Naive thymus-derived CD4-positive, alpha-beta T cell (primary cell): ENCODE measurements at regions of chr6 and their contacts with region 1.

Region 1: DNA sequence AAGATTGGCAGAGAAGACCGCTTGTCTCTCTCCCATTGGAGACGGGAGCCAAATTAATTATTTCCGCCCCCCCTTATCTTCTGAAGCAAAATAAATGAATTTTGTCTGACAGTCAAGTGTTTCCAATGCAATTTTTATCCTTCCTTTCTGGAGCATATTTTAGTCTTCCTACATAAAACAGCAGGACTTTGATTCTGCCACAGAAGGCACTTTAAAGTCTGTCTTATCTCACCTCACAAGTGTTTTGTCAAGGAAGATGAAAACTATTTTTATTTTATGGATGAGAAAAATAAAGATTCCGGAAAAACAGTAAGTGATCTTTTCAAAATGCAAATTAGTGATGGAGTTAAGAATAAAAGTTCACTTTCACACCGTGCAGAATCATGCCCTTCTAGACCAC is 140.4 kb downstream of the OPRM1 start:
- DNase-seq: no peak
- ATAC-seq: no peak
- H3K4me3 ChIP-seq: no peak overlapping the region
- H3K4me3 Mint-ChIP-seq: peak overlapping the region in 2 of 10 donors; percentile 5 to 48
- H3K27ac ChIP-seq: no peak overlapping the region
- H3K27ac Mint-ChIP-seq: peak overlapping the region in 8 of 9 donors; percentile 18 to 82 (median 66)
- H3K4me1 ChIP-seq: peaks cover 0 to 6% of the 10 kb centered on the region in 2 donors
- H3K4me1 Mint-ChIP-seq: peaks cover 0 to 89% (median 68%) of the 10 kb centered on the region in 7 donors
- H3K27me3 ChIP-seq: no peaks in the 10 kb centered on the region
- H3K27me3 Mint-ChIP-seq: no peaks in the 10 kb centered on the region

Region 2: GRCh38 chr6:152552616-152553209 is 1626.7 kb before region 1 on chr6:
- CTCF ChIA-PET with region 1: no interaction called
- POLR2A ChIA-PET with region 1: no interaction called
- intact Hi-C with region 1: no loop called
- DNase-seq: peak in 2 of 9 donors; percentile 5 to 22
- ATAC-seq: peak; percentile 80
- H3K4me3 ChIP-seq: no peak overlapping the region
- H3K4me3 Mint-ChIP-seq: no peak overlapping the region
- H3K27ac ChIP-seq: no peak overlapping the region
- H3K27ac Mint-ChIP-seq: no peak overlapping the region
- H3K4me1 ChIP-seq: no peaks in the 10 kb centered on the region
- H3K4me1 Mint-ChIP-seq: no peaks in the 10 kb centered on the region
- H3K27me3 ChIP-seq: no peaks in the 10 kb centered on the region
- H3K27me3 Mint-ChIP-seq: peaks cover 0 to 17% (median 4%) of the 10 kb centered on the region in 5 donors

Region 3: GRCh38 chr6:154164397-154165165 is 14.9 kb before region 1 on chr6:
- CTCF ChIA-PET with region 1: interaction called, 4 read pairs
- POLR2A ChIA-PET with region 1: interaction called, 4 read pairs
- intact Hi-C with region 1: loop called in 1 of 2 experiments (anchors 2 kb)
- DNase-seq: peak in 6 of 9 donors; percentile 33 to 54 (median 44)
- ATAC-seq: no peak
- H3K4me3 ChIP-seq: no peak overlapping the region
- H3K4me3 Mint-ChIP-seq: peak overlapping the region in 9 of 10 donors; percentile 48 to 77 (median 72)
- H3K27ac ChIP-seq: peak overlapping the region; percentile 35
- H3K27ac Mint-ChIP-seq: peak overlapping the region in 6 of 9 donors; percentile 33 to 93 (median 87)
- H3K4me1 ChIP-seq: peaks cover 0 to 38% of the 10 kb centered on the region in 2 donors
- H3K4me1 Mint-ChIP-seq: peaks cover 11 to 59% (median 33%) of the 10 kb centered on the region in 7 donors
- H3K27me3 ChIP-seq: no peaks in the 10 kb centered on the region
- H3K27me3 Mint-ChIP-seq: peaks cover 0 to 2% (median 0%) of the 10 kb centered on the region in 5 donors

Region 4: DNA sequence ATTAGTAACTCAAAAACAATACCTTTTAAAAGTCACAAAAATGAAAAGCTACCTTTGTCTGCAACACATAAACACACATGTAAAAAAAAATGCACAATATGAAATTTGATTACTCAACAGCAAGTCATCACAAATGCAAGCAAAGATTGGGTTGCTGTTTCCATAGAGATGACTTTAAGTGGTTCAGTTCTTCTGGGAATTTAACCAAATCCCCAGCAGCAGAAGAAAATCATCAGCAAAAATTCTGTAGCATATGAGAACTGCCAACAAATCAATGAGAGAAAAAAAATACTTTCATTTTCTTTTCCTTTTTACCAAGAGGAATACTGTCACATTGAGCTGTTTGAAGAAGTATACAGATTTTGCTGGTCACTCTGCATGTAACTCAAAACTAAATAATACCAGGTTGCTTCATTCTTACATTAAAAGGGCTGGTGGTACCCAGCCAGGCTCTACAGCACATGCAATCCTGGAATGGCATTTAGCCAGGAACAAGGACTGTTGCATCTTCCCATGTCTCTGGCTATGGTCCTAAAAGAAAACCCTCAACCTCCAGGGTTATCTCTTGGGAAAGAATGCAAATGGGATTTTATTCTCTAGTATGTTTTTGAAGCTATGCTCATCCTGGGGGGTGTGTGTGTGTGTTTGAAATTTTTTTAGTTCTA is 17.9 kb after region 1 on chr6:
- CTCF ChIA-PET with region 1: no interaction called
- POLR2A ChIA-PET with region 1: no interaction called
- intact Hi-C with region 1: loop called in 1 of 2 experiments (anchors 2 kb)
- DNase-seq: no peak
- ATAC-seq: no peak
- H3K4me3 ChIP-seq: no peak overlapping the region
- H3K4me3 Mint-ChIP-seq: peak overlapping the region in 2 of 10 donors; percentile 28 to 41
- H3K27ac ChIP-seq: no peak overlapping the region
- H3K27ac Mint-ChIP-seq: peak overlapping the region in 6 of 9 donors; percentile 22 to 80 (median 64)
- H3K4me1 ChIP-seq: peaks cover 0 to 13% of the 10 kb centered on the region in 2 donors
- H3K4me1 Mint-ChIP-seq: peaks cover 14 to 94% (median 85%) of the 10 kb centered on the region in 7 donors
- H3K27me3 ChIP-seq: no peaks in the 10 kb centered on the region
- H3K27me3 Mint-ChIP-seq: no peaks in the 10 kb centered on the region